ENCODE measurements at regions of chr22 and their contacts with region 1.

Region 1: DNA sequence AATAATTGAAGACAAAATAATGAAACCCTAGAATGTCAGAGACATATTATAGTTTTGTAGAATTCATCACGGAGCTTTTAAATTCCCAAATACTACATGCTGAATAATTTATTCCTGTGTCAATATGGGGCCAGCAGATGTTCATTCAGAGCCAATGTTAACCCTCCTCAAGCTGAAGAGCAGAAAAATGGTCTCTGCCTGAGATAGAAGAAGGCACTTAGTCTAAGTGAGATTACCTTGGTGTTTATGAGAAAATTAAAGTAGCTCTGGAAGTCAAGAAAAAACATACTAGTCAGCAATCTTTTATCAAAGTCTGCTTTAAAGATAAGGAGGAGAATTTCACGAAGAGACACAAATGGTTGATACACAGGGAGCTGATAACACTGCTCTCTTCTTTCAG is 328.2 kb downstream of the TTC28 start:
- DNase-seq: no peak
- H3K4me3 Mint-ChIP-seq: no peak overlapping the region
- H3K27ac Mint-ChIP-seq: no peak overlapping the region
- H3K4me1 Mint-ChIP-seq: no peaks in the 10 kb centered on the region
- H3K27me3 Mint-ChIP-seq: peaks cover 32% of the 10 kb centered on the region
- CTCF ChIP-seq: no peak

Region 2: GRCh38 chr22:27997538-27997937 is 353.9 kb before region 1 on chr22:
- CTCF ChIA-PET with region 1: no interaction called
- intact Hi-C with region 1: no loop called
- DNase-seq: no peak
- H3K4me3 Mint-ChIP-seq: no peak overlapping the region
- H3K27ac Mint-ChIP-seq: no peak overlapping the region
- H3K4me1 Mint-ChIP-seq: no peaks in the 10 kb centered on the region
- H3K27me3 Mint-ChIP-seq: no peaks in the 10 kb centered on the region
- CTCF ChIP-seq: no peak

Region 3: GRCh38 chr22:28424427-28425080 is 73.1 kb after region 1 on chr22:
- CTCF ChIA-PET with region 1: no interaction called
- intact Hi-C with region 1: loop called (anchors 10 kb)
- DNase-seq: no peak
- H3K4me3 Mint-ChIP-seq: no peak overlapping the region
- H3K27ac Mint-ChIP-seq: no peak overlapping the region
- H3K4me1 Mint-ChIP-seq: no peaks in the 10 kb centered on the region
- H3K27me3 Mint-ChIP-seq: peaks cover 2% of the 10 kb centered on the region
- CTCF ChIP-seq: no peak

Region 4: GRCh38 chr22:28488825-28489224 is 137.3 kb after region 1 on chr22:
- CTCF ChIA-PET with region 1: no interaction called
- intact Hi-C with region 1: no loop called
- DNase-seq: no peak
- H3K4me3 Mint-ChIP-seq: no peak overlapping the region
- H3K27ac Mint-ChIP-seq: no peak overlapping the region
- H3K4me1 Mint-ChIP-seq: no peaks in the 10 kb centered on the region
- H3K27me3 Mint-ChIP-seq: peaks cover 13% of the 10 kb centered on the region
- CTCF ChIP-seq: no peak